Activated CD4-positive, alpha-beta T cell treated with anti-CD3 and anti-CD28 coated beads for 36 hours (primary cell): ENCODE measurements at regions of chr19 and their contacts with region 1.

Region 1: GRCh38 chr19:52897144-52897935 is at the start of gene ZNF320:
- DNase-seq: peak; percentile 98
- ATAC-seq: peak; percentile 100
- H3K4me3 Mint-ChIP-seq: peak within 1 kb of the TSS; percentile 88
- H3K27ac Mint-ChIP-seq: peak within 1 kb of the TSS; percentile 93
- H3K4me1 Mint-ChIP-seq: peaks cover 31% of the 10 kb centered on the region
- H3K27me3 Mint-ChIP-seq: no peaks in the 10 kb centered on the region
- total RNA-seq, gene ZNF320: 10.8 to 12.2 TPM

Region 2: DNA sequence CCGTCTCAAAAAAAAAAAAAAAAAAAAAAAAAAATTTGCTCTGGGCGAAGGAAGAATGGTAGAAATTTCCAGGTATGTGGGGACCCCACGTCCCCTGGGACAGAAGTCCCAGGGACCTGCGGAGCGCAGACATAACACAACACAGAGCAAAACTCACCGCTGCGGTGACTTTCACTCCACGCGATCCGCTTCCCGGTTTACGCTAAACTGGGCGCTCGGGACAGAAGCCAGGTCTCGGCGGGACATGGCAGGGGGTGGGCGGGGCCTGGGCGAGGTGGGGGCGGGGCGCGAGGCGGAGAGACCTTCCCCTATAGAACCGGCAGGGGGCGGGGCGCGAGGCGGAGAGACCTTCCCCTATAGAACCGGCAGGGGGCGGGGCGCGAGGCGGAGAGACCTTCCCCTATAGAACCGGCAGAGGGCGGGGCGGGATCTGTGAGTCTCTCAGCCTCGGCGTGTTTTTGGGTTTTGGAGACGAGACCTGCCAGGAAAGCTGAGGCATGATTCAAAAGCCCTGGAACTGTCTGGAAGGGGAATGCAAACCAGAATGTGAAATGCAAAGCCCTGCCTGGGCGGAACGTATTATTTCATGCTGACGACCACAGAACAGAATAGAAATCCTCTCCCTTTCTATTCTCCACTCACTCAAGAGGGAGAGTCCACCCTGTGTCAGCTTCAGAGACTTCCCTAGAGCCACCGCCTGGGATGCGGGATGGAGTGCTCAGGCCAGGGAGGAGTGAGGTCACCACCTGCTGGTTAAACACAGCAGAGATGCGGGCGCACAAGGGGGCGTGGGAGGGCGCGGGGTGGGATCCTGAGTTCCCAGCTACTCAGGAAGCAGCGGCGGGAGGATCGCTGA is 96.2 kb after region 1 on chr19:
- CTCF ChIA-PET with region 1: no interaction called
- POLR2A ChIA-PET with region 1: no interaction called
- intact Hi-C with region 1: loop called in 1 of 2 experiments (anchors 1 kb)
- DNase-seq: peak; percentile 88
- ATAC-seq: peak; percentile 88
- H3K4me3 Mint-ChIP-seq: peak overlapping the region; percentile 72
- H3K27ac Mint-ChIP-seq: no peak overlapping the region
- H3K4me1 Mint-ChIP-seq: peaks cover 15% of the 10 kb centered on the region
- H3K27me3 Mint-ChIP-seq: peaks cover 9% of the 10 kb centered on the region